ENCODE measurements at regions of chr1 and their contacts with region 1.

Region 1: DNA sequence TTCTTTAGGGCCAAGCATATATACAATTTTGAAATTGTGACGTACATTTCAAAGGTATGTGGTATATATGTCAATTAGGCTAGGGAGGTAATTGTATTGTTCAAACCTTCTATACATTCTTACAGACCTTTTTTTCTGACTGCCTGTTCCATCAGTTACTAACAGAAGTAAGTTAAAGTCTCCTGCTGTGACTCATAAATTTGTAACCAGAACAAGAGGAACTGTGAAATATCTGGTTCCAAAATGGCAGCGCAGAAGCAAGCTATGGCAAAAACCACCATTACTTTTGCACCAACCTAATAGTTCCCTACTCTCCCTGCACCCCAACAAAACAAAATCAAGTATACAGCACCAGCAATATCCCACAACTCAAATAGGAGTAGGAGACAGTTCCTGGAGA is 93.6 kb downstream of the ENAH start:
- DNase-seq: no peak
- ATAC-seq: no peak
- H3K4me3 ChIP-seq: no peak overlapping the region
- H3K27ac ChIP-seq: no peak overlapping the region
- H3K4me1 ChIP-seq: peaks cover 2% of the 10 kb centered on the region in 2 donors
- H3K27me3 ChIP-seq: no peaks in the 10 kb centered on the region

Region 2: DNA sequence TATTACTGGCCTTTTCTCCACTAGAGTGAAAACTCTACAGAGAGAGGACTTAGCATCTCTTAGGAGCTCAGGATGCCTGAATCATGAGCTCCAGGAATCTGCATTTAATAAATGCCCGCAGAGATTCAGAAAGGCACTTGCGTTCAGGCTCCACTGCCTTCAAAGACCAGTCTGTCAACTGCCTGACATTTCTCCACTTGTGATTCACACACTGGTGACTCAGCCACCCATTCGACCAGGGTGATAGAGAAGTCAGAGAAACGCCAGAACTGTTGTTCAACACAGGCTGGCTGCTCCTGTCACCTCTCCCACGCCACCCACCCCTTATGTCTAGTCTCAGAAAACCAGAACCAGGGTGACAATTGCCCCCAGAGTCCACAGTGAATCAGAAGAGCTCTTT is 104.6 kb before region 1 on chr1:
- intact Hi-C with region 1: no loop called
- DNase-seq: no peak
- ATAC-seq: peak; percentile 62
- H3K4me3 ChIP-seq: no peak overlapping the region
- H3K27ac ChIP-seq: no peak overlapping the region
- H3K4me1 ChIP-seq: peaks cover 0 to 5% of the 10 kb centered on the region in 2 donors
- H3K27me3 ChIP-seq: no peaks in the 10 kb centered on the region

Region 3: DNA sequence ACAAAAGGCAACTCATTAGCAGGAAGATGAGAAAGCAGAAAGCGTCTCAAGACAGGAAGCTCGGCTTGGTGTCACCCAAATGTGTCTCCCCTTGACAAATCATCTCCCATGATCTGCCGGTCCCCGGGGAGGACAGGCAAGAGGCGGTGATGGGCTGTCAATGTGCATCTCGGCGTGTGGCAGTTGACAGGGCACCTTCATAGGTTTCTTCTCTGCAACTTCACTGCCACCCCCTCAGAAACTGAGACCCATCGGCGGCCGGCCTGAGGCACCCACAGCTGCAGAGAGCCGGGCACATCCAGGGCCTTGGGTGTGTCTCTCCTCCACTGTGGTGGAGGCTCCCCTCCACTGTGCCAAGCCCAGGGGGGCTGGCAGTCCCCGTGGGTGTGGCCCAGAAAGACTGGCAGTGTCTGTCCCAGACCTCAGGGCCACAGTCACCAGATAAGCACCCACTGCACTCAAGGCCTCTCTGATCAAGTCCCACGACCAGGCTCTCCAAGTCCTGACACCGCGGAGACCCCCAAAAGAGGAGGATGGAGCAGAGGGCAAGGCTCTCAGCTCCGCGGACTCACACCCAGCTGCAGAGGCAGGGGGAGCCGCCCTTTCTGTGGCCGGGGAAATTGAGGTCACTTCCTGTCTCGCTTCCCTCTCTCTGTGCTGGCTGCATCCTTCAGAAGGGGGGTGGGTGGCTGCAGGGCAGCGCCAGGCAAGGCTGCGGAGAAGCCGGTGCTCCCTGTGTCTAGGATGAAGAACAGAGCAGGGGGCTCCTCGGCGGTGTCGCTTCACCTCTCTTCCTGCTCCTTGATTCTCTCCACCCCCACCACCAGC is 91.9 kb before region 1 on chr1:
- intact Hi-C with region 1: no loop called
- DNase-seq: peak; percentile 78 to 90
- ATAC-seq: peak; percentile 71
- H3K4me3 ChIP-seq: no peak overlapping the region
- H3K27ac ChIP-seq: no peak overlapping the region
- H3K4me1 ChIP-seq: no peaks in the 10 kb centered on the region
- H3K27me3 ChIP-seq: no peaks in the 10 kb centered on the region

Region 4: DNA sequence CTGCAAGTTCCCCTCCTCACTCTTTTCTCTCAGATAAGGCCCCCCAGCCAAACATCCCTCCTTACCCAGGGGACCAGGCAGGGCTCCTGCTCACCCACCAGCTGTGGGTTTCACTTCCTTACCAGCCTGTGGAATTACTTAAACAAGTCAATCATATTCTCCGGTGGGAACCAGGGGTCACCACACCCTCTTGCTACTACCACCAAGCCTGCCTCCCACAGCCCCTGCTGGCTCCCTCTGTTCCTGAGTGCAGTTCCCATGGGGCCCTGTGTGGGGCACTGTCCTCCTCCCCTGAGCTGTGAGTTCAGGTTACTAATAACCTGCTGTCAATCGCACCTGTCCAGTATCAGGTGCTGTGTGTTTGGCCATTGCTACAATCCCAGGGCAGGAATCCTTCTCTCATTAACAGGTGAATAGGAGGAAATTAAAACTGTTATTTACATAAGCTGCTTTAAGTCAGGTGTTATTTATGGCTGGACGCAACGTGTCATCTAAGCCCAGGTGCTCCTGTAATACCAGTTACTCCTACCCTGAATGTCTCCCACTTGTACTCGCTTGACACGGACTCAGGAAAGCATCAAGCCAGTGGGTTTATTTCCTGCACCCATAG is 78.4 kb before region 1 on chr1:
- intact Hi-C with region 1: loop called in 1 of 2 experiments (anchors 5 kb)
- DNase-seq: peak; percentile 48 to 79
- ATAC-seq: peak; percentile 42
- H3K4me3 ChIP-seq: no peak overlapping the region
- H3K27ac ChIP-seq: no peak overlapping the region
- H3K4me1 ChIP-seq: peaks cover 0 to 2% of the 10 kb centered on the region in 2 donors
- H3K27me3 ChIP-seq: no peaks in the 10 kb centered on the region

Region 5: GRCh38 chr1:225772323-225772768 is 213.0 kb after region 1 on chr1:
- intact Hi-C with region 1: loop called in 1 of 2 experiments (anchors 5 kb)
- DNase-seq: peak; percentile 87 to 91
- ATAC-seq: peak; percentile 88
- H3K4me3 ChIP-seq: no peak overlapping the region
- H3K27ac ChIP-seq: no peak overlapping the region
- H3K4me1 ChIP-seq: peaks cover 0 to 2% of the 10 kb centered on the region in 2 donors
- H3K27me3 ChIP-seq: no peaks in the 10 kb centered on the region

Region 6: GRCh38 chr1:226186124-226187018 is 627.0 kb after region 1 on chr1 and contains the start of gene ACBD3:
- intact Hi-C with region 1: no loop called
- DNase-seq: peak; percentile 94 to 95
- ATAC-seq: peak; percentile 94
- H3K4me3 ChIP-seq: peak within 1 kb of the TSS; percentile 84 to 90
- H3K27ac ChIP-seq: peak within 1 kb of the TSS; percentile 34 to 81
- H3K4me1 ChIP-seq: peaks cover 0 to 3% of the 10 kb centered on the region in 2 donors
- H3K27me3 ChIP-seq: no peaks in the 10 kb centered on the region
- total RNA-seq, gene ACBD3: 41.6 to 45.5 TPM

Measured in aorta (tissue), 5 donors.